H1 (cell line): ENCODE measurements at regions of chr9 and their contacts with region 1.

Region 1: DNA sequence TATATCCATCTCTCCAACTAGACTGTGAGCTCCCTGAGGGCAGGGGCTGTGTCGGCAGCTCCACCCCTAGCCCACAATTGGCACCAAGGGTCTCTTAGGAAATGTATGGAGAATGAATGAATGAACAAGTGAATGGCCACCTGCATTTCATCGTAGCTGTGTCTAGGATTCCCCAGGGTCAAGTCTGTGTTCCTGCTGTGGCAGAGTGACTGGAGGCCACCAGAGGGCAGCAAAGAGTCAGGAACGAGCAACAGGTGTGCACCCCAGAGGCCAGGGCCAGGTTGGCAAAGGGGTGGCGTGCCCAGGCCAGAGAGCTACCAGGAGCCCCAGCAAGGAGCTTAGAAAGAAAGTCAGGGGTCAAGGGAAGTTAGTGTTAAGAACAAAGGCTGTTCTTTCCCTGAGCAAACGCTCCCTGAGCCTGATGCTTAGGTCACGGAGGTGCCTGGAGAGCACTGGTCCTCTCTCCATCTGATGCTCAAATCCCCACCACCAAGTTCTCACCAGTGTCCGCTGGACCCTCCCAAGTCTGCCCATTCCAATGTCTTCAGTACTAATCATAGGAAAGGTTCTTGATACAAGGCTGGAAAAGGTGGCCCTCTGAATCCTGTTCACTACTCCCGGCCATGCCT is 160.7 kb downstream of the PAX5 start:
- DNase-seq: peak in 1 of 2 experiments; percentile 89
- H3K4me3 ChIP-seq: no peak overlapping the region
- H3K27ac ChIP-seq: no peak overlapping the region
- H3K4me1 ChIP-seq: no peaks in the 10 kb centered on the region; a peak in 1 of 7 replicates
- H3K27me3 ChIP-seq: peaks cover 0 to 2% (median 0%) of the 10 kb centered on the region in 4 experiments; a peak in 1 of 7 replicates
- CTCF ChIP-seq: peak; percentile 93 to 98 (median 95)
- EP300 ChIP-seq: no peak
- POLR2A ChIP-seq: no peak
- RAD21 ChIP-seq: peak; percentile 94 to 98

Region 2: DNA sequence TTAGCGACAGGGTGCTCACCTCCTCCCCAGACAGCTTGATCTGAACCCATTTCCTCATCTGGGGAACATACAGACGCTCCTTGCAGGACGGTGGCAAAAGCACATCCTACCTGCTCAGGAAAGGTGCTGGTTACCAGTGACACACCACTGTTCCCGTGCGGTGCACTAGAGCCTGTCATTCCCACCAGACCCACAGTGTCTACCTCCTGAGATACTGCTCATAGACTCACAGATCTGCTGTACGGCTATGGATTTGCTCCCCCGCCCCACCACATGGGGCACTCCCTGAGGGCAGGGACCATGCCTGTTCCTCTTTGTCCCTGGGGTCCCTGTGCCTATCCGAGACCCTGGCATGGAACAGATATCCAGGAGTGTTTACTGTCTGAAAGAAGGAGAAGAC is 48.2 kb before region 1 on chr9:
- CTCF ChIA-PET with region 1: no interaction called
- POLR2A ChIA-PET with region 1: no interaction called
- DNase-seq: no peak
- H3K4me3 ChIP-seq: no peak overlapping the region
- H3K27ac ChIP-seq: no peak overlapping the region
- H3K4me1 ChIP-seq: peaks cover 0 to 7% (median 0%) of the 10 kb centered on the region in 4 experiments; a peak in 2 of 7 replicates
- H3K27me3 ChIP-seq: no peaks in the 10 kb centered on the region
- CTCF ChIP-seq: no peak
- EP300 ChIP-seq: no peak
- POLR2A ChIP-seq: no peak
- RAD21 ChIP-seq: no peak

Region 3: GRCh38 chr9:36840898-36841536 is 32.3 kb before region 1 on chr9:
- CTCF ChIA-PET with region 1: interaction called, 12 read pairs
- POLR2A ChIA-PET with region 1: no interaction called
- DNase-seq: no peak
- H3K4me3 ChIP-seq: no peak overlapping the region
- H3K27ac ChIP-seq: no peak overlapping the region
- H3K4me1 ChIP-seq: peaks cover 2 to 21% (median 12%) of the 10 kb centered on the region in 4 experiments
- H3K27me3 ChIP-seq: no peaks in the 10 kb centered on the region; a peak in 1 of 7 replicates
- CTCF ChIP-seq: no peak
- EP300 ChIP-seq: no peak
- POLR2A ChIP-seq: no peak
- RAD21 ChIP-seq: no peak

Region 4: DNA sequence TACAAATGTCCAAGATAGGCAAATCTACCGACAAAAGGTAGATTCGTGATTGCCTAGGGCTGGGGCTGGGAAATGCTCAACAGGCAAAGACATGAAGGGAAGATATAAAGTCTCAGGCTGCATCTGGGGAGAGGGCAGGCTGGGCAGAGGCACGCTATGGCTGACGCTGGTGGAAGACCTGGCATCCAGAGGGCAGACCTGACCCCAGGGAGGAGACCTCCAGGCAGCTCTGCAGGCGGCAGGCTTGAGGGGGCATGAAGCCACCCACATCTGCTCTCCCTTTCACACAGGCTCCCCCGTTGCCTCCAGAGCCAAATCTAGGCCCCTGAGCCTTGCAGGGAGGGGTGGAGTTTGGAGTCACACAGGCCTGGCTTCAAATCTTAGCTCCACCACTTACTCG is 15.2 kb after region 1 on chr9:
- CTCF ChIA-PET with region 1: interaction called, 68 read pairs
- POLR2A ChIA-PET with region 1: no interaction called
- DNase-seq: no peak
- H3K4me3 ChIP-seq: no peak overlapping the region
- H3K27ac ChIP-seq: no peak overlapping the region
- H3K4me1 ChIP-seq: peaks cover 0 to 2% (median 0%) of the 10 kb centered on the region in 4 experiments; a peak in 3 of 7 replicates
- H3K27me3 ChIP-seq: no peaks in the 10 kb centered on the region; a peak in 1 of 7 replicates
- CTCF ChIP-seq: no peak
- EP300 ChIP-seq: no peak
- POLR2A ChIP-seq: no peak
- RAD21 ChIP-seq: no peak

Region 5: GRCh38 chr9:36937346-36937745 is 64.0 kb after region 1 on chr9:
- CTCF ChIA-PET with region 1: interaction called, 17 read pairs
- POLR2A ChIA-PET with region 1: no interaction called
- DNase-seq: no peak
- H3K4me3 ChIP-seq: no peak overlapping the region
- H3K27ac ChIP-seq: no peak overlapping the region
- H3K4me1 ChIP-seq: peaks cover 0 to 8% (median 3%) of the 10 kb centered on the region in 4 experiments; a peak in 4 of 7 replicates
- H3K27me3 ChIP-seq: no peaks in the 10 kb centered on the region
- CTCF ChIP-seq: no peak
- EP300 ChIP-seq: no peak
- POLR2A ChIP-seq: no peak
- RAD21 ChIP-seq: no peak

Region 6: GRCh38 chr9:36974731-36975130 is 101.4 kb after region 1 on chr9:
- CTCF ChIA-PET with region 1: interaction called, 657 read pairs
- POLR2A ChIA-PET with region 1: no interaction called
- DNase-seq: peak in 1 of 2 experiments; percentile 41
- H3K4me3 ChIP-seq: no peak overlapping the region
- H3K27ac ChIP-seq: no peak overlapping the region
- H3K4me1 ChIP-seq: peaks cover 0 to under 1% (median under 1%) of the 10 kb centered on the region in 4 experiments; a peak in 2 of 7 replicates
- H3K27me3 ChIP-seq: peaks cover 0 to 3% (median 1%) of the 10 kb centered on the region in 4 experiments; a peak in 2 of 7 replicates
- CTCF ChIP-seq: peak; percentile 29 to 41 (median 33)
- EP300 ChIP-seq: no peak
- POLR2A ChIP-seq: no peak
- RAD21 ChIP-seq: peak; percentile 30 to 45; a peak in 3 of 4 replicates